Endothelial cell of umbilical vein (primary cell): ENCODE measurements at regions of chr3 and their contacts with region 1.

Region 1: GRCh38 chr3:20225769-20226168 is 39.8 kb upstream of the SGO1 start:
- DNase-seq: peak; percentile 81
- H3K4me3 ChIP-seq: no peak overlapping the region
- H3K27ac ChIP-seq: no peak overlapping the region
- H3K4me1 ChIP-seq: no peaks in the 10 kb centered on the region
- H3K27me3 ChIP-seq: no peaks in the 10 kb centered on the region
- CTCF ChIP-seq: peak; percentile 35 to 48
- POLR2A ChIP-seq: no peak

Region 2: GRCh38 chr3:20326541-20326940 is 100.8 kb after region 1 on chr3:
- CTCF ChIA-PET with region 1: interaction called, 10 read pairs
- POLR2A ChIA-PET with region 1: no interaction called
- dilution Hi-C with region 1: no loop called
- intact Hi-C with region 1: no loop called
- DNase-seq: no peak
- H3K4me3 ChIP-seq: no peak overlapping the region
- H3K27ac ChIP-seq: no peak overlapping the region
- H3K4me1 ChIP-seq: no peaks in the 10 kb centered on the region
- H3K27me3 ChIP-seq: peaks cover 0 to 2% of the 10 kb centered on the region in 2 experiments
- CTCF ChIP-seq: no peak
- POLR2A ChIP-seq: no peak

Region 3: GRCh38 chr3:20380295-20380694 is 154.5 kb after region 1 on chr3:
- CTCF ChIA-PET with region 1: no interaction called
- POLR2A ChIA-PET with region 1: no interaction called
- dilution Hi-C with region 1: no loop called
- intact Hi-C with region 1: loop called (anchors 5 kb)
- DNase-seq: no peak
- H3K4me3 ChIP-seq: no peak overlapping the region
- H3K27ac ChIP-seq: no peak overlapping the region
- H3K4me1 ChIP-seq: no peaks in the 10 kb centered on the region
- H3K27me3 ChIP-seq: no peaks in the 10 kb centered on the region
- CTCF ChIP-seq: no peak
- POLR2A ChIP-seq: no peak

Region 4: GRCh38 chr3:20739814-20740213 is 514.0 kb after region 1 on chr3:
- CTCF ChIA-PET with region 1: no interaction called
- POLR2A ChIA-PET with region 1: no interaction called
- dilution Hi-C with region 1: no loop called
- intact Hi-C with region 1: loop called (anchors 5 kb)
- DNase-seq: peak; percentile 1
- H3K4me3 ChIP-seq: no peak overlapping the region
- H3K27ac ChIP-seq: no peak overlapping the region
- H3K4me1 ChIP-seq: no peaks in the 10 kb centered on the region
- H3K27me3 ChIP-seq: no peaks in the 10 kb centered on the region
- CTCF ChIP-seq: no peak
- POLR2A ChIP-seq: no peak

Region 5: DNA sequence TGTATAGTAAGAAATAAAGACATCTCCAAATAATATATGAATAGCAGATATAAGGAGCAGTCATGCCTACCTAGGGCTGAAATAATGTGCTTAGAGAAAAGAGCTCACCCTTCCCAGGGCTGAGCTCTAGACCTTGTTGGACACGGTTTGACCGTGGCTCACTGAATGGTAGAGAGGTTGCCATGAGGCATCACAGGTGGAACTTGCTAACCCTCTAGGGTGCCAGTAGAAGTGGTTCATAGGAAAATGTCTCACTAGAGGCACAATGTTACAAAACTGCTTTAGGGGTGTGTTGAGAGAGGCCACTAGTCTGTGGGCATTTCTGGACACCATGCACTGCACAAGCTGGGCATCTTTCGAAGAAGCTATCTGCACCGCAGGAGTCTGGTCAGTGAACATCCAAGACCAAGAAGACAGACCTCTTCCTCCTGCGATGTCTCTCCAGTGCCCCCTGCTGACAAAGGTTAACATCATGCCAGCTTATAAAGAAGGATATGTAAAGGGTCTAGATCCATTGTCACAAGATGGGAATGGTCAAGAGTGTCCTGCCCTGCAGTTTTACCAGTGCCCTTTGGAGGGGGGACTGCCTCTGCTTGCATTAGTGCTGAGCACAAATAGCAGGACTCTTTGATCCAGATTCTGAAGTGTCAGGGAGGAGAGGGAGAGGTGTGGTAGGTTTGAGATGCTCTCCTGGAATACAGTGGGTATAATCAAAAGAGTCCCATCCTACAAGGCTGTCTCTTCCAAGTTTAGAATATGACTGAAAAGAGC is 1258.5 kb after region 1 on chr3:
- CTCF ChIA-PET with region 1: interaction called, 11 read pairs
- POLR2A ChIA-PET with region 1: no interaction called
- dilution Hi-C with region 1: no loop called
- intact Hi-C with region 1: loop called (anchors 1 kb)
- DNase-seq: peak; percentile 61
- H3K4me3 ChIP-seq: no peak overlapping the region
- H3K27ac ChIP-seq: no peak overlapping the region
- H3K4me1 ChIP-seq: no peaks in the 10 kb centered on the region
- H3K27me3 ChIP-seq: no peaks in the 10 kb centered on the region
- CTCF ChIP-seq: peak; percentile 55 to 61
- POLR2A ChIP-seq: no peak